Right ventricle myocardium inferior (tissue), 1 donor: ENCODE measurements at regions of chr12 and their contacts with region 1.

Region 1: DNA sequence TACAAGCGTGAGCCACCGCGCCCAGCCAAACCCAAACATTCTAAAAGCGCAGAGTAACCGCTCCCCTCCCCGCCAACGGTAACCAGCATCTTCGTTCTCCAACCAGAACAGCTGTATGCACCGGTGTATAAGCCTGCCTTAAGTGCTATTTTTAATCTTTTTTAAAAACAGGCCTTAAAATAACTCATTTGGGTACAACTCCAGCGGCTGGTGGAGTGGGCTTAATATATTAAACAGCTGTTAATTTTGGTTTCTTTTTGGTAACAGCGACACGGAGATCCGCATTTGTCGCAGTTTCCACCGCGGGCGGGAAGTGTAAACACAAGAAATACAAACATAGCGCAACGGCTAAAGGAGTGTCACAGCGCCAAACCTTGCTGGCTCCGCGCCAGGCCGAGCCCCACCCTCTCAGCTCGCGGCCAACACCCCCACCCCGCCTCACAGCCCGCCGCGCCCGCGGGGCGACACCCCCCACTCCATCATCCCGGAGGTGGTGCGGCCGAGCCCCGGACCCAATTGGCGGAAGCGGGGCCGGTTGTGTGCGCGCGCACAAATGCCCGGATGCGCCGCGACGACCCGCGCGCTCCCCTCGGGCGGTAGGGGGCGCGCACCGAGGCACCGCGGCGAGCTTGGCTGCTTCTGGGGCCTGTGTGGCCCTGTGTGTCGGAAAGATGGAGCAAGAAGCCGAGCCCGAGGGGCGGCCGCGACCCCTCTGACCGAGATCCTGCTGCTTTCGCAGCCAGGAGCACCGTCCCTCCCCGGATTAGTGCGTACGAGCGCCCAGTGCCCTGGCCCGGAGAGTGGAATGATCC is at the start of gene MDM2:
- DNase-seq: peak; percentile 99
- ATAC-seq: peak; percentile 98
- total RNA-seq, gene MDM2: 37.3 TPM

Region 2: GRCh38 chr12:68331869-68332727 is 475.7 kb before region 1 on chr12 and contains the start of gene MDM1:
- intact Hi-C with region 1: loop called (anchors 10 kb)
- DNase-seq: peak; percentile 98
- ATAC-seq: peak; percentile 100
- total RNA-seq, gene MDM1: 7.4 TPM

Region 3: GRCh38 chr12:68745904-68746571 is 61.7 kb before region 1 on chr12 and contains the start of gene SLC35E3:
- intact Hi-C with region 1: loop called (anchors 1 kb)
- DNase-seq: peak; percentile 98
- ATAC-seq: peak; percentile 100
- total RNA-seq, gene SLC35E3: 4.2 TPM

Region 4: GRCh38 chr12:68915055-68915454 is 107.3 kb after region 1 on chr12:
- intact Hi-C with region 1: no loop called
- DNase-seq: no peak
- ATAC-seq: no peak

Region 5: DNA sequence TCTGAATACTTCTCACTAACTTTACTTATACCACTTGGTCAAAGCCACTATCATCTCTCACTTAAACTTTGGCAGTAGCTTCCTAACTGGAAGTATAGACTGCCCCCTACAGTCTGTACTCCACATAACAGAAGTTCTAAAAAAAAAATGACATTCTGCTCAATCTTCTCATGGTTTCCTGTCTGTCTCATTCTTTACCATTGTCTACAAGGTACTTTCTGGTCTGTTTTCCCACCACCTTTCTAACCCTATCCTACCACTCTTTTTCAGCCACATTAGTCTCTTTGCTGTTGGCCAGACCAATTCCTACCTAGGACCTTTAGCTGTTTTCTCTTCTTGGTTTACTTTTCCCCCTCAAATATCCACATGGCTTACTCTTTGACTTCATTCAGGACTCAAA is 446.3 kb after region 1 on chr12:
- intact Hi-C with region 1: loop called (anchors 10 kb)
- DNase-seq: no peak
- ATAC-seq: peak; percentile 64